Panc1 (cell line): ENCODE measurements at regions of chr10 and their contacts with region 1.

Region 1: DNA sequence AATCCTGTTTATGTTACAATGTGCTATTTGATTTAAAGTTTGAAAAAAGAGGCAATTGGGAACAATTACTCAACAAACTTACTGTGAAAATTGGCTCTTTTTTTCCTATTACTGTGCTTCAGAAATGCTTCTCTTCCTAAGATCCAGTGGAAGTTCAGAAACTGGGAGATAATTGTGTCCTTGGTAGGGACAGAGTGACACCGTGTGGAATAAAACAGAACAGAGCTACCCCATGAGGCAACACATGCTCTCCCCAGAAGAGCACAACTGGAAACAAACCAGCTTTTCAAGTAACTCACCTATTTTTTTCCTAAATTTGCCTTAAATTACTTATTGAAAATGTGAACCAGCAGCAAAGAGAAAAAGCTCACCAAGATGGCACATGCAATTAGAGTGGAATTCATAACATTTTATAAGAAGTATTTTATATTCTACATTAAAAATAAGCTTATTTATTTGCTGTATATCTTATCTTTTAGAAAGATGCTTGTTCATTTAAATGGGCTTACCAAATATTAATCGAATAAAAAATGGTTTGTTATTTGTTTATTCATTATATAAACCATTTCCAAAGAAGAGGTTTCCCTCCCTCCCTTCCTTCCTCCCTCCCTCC is 346.1 kb upstream of the ANKRD30A start:
- DNase-seq: peak; percentile 25
- ATAC-seq: peak; percentile 83
- H3K4me3 ChIP-seq: no peak overlapping the region
- H3K27ac ChIP-seq: no peak overlapping the region
- H3K4me1 ChIP-seq: no peaks in the 10 kb centered on the region
- H3K27me3 ChIP-seq: no peaks in the 10 kb centered on the region
- CTCF ChIP-seq: peak; percentile 68; the same call in 1 of the 2 replicates

Region 2: DNA sequence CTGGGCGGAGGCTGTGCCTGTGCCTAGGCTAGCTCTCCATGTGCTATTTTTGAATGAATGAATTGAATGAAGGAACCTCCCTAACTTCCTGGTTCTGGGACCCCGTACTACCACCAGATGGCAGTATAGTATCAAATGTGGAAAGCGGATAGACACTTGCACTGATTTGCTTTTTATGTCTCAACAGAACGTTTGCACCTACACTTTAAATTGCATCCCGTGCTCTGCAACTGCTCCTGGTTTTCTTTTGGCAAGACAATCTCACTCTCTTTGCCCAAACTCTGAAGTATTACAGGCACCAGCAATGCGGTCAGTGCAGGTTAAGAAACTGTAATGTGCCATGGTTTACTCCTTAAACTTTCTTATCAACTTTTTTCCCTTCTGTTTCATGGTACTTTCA is 1143.8 kb before region 1 on chr10:
- CTCF ChIA-PET with region 1: interaction called, 13 read pairs
- POLR2A ChIA-PET with region 1: no interaction called
- in situ Hi-C with region 1: no loop called
- intact Hi-C with region 1: loop called (anchors 2 kb)
- DNase-seq: peak; percentile 45
- ATAC-seq: peak; percentile 83
- H3K4me3 ChIP-seq: no peak overlapping the region
- H3K27ac ChIP-seq: no peak overlapping the region
- H3K4me1 ChIP-seq: no peaks in the 10 kb centered on the region
- H3K27me3 ChIP-seq: no peaks in the 10 kb centered on the region; the same call in 1 of the 2 replicates
- CTCF ChIP-seq: peak; percentile 81

Region 3: GRCh38 chr10:36789974-36790373 is 10.6 kb after region 1 on chr10:
- CTCF ChIA-PET with region 1: no interaction called
- POLR2A ChIA-PET with region 1: interaction called, 12 read pairs
- in situ Hi-C with region 1: no loop called
- intact Hi-C with region 1: no loop called
- DNase-seq: no peak
- ATAC-seq: no peak
- H3K4me3 ChIP-seq: no peak overlapping the region
- H3K27ac ChIP-seq: no peak overlapping the region
- H3K4me1 ChIP-seq: no peaks in the 10 kb centered on the region
- H3K27me3 ChIP-seq: no peaks in the 10 kb centered on the region; the same call in 1 of the 2 replicates
- CTCF ChIP-seq: no peak

Region 4: GRCh38 chr10:36903046-36903445 is 123.7 kb after region 1 on chr10:
- CTCF ChIA-PET with region 1: no interaction called
- POLR2A ChIA-PET with region 1: no interaction called
- in situ Hi-C with region 1: no loop called
- intact Hi-C with region 1: no loop called
- DNase-seq: no peak
- ATAC-seq: no peak
- H3K4me3 ChIP-seq: no peak overlapping the region
- H3K27ac ChIP-seq: no peak overlapping the region
- H3K4me1 ChIP-seq: no peaks in the 10 kb centered on the region
- H3K27me3 ChIP-seq: no peaks in the 10 kb centered on the region
- CTCF ChIP-seq: no peak